PC-3 (cell line): ENCODE measurements at regions of chr3 and their contacts with region 1.

Region 1: DNA sequence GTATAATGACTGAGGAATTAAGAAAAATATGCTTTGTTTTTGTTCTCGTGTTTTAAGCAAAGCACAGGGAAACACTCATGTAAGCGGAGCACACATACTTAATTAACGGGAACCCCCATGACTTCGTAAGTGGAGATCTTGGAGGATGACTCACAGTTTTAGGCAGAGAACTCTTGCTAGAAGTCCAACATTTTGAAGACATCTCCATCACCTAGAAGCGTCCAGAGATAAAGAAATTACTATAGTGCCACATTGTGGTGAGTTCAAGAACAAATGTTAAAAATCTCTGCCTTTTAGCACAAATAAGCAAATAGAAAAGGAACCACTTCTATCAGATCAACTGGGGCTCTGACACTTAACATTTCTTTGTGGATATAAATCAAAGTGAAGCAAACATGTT is 194.1 kb upstream of the ARHGEF26 start:
- DNase-seq: peak; percentile 80
- ATAC-seq: peak; percentile 93
- H3K4me3 ChIP-seq: 0 out of 2 replicates have a peak overlapping the region, but pooled peaks have one; percentile 5
- H3K27ac ChIP-seq: no peak overlapping the region
- H3K4me1 ChIP-seq: peaks cover 6% of the 10 kb centered on the region
- H3K27me3 ChIP-seq: no peaks in the 10 kb centered on the region
- CTCF ChIP-seq: peak; percentile 65

Region 2: DNA sequence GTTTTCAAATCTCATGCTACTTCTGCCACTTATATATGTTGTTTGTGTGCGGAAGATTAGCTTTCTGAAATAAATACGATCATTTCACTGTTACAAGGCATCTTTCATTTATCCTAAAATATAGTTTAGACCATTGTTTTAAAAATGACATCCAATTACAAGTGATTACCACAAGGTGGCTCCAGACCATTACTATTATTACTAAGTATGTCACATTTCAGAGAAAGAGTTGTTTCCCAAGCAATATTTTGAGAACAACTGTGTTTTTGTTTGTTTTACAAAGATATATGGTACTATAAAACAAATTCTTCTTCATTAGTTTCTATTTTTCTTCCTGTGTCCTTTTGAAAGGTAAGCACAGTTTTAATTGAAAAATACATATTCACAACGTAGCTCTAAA is 901.1 kb before region 1 on chr3:
- CTCF ChIA-PET with region 1: no interaction called
- POLR2A ChIA-PET with region 1: no interaction called
- intact Hi-C with region 1: loop called (anchors 5 kb)
- DNase-seq: peak; percentile 67
- ATAC-seq: peak; percentile 33
- H3K4me3 ChIP-seq: no peak overlapping the region
- H3K27ac ChIP-seq: no peak overlapping the region
- H3K4me1 ChIP-seq: no peaks in the 10 kb centered on the region
- H3K27me3 ChIP-seq: no peaks in the 10 kb centered on the region
- CTCF ChIP-seq: peak; percentile 91

Region 3: DNA sequence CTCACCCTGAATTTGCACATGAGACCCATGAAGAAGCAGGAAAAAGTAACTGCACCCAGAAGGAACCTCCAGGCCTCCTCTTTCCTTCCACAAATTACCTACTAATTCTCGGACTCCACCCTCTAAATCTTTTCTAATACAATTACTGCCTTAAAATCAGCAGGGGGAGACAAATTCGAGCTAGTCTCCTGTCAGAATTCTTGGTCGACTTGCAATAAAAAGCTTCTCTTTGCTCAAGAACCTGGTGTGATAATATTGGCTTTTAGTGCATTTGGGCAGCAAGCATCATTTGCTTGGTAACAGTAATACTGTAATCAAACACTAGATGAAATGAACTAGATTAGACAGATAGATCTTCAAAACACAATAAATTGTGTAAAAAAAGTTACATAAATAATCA is 483.1 kb before region 1 on chr3:
- CTCF ChIA-PET with region 1: no interaction called
- POLR2A ChIA-PET with region 1: no interaction called
- intact Hi-C with region 1: loop called (anchors 2 kb)
- DNase-seq: peak; percentile 65
- ATAC-seq: no peak
- H3K4me3 ChIP-seq: no peak overlapping the region
- H3K27ac ChIP-seq: no peak overlapping the region
- H3K4me1 ChIP-seq: no peaks in the 10 kb centered on the region
- H3K27me3 ChIP-seq: no peaks in the 10 kb centered on the region
- CTCF ChIP-seq: peak; percentile 72

Region 4: DNA sequence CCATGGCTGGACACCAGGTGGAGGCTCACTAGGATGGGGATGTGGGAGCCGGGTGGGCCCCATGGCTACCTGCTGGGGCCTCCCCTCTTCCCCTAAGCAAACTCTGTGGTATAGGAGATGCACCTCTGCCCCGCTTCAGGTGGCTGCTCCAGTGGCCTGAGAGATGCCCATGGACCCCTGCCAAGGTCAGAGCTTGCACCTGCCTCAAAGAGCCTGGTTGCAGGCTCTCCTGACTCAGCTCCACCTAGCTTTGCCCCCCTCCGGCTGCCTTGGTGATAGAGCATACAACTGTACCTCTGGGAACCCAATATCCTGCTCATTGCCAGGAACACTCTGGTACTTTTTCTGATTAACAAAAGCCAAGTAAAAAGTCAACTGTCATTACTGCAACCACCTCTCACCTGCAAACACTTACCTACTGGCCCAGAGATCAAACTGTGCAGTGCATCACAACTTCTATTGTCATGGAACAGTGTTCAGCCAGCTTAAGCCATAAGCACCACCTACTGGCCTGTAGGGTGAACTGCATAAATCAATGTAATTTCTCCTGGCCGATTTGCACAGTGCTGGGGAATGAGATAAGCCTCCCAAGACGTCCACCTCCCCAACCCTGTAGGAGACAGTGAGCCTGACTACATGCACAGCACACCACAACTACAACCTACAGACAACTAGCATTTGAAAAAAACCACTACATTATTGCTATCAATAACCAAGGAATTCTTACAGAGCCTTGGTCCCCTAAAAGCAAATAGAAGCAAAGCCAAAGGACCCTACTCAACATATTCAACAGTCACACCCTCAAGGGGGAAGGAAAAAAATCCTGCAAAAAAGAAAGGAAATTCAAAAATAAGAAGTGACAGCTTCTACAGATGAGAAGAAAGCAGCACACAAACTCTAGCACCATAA is 158.3 kb before region 1 on chr3:
- CTCF ChIA-PET with region 1: no interaction called
- POLR2A ChIA-PET with region 1: no interaction called
- intact Hi-C with region 1: loop called (anchors 2 kb)
- DNase-seq: peak; percentile 78
- ATAC-seq: peak; percentile 93
- H3K4me3 ChIP-seq: no peak overlapping the region
- H3K27ac ChIP-seq: no peak overlapping the region
- H3K4me1 ChIP-seq: 0 out of 2 replicates have a peak, but pooled peaks cover 4% of the 10 kb centered on the region
- H3K27me3 ChIP-seq: no peaks in the 10 kb centered on the region
- CTCF ChIP-seq: peak; percentile 96

Region 5: DNA sequence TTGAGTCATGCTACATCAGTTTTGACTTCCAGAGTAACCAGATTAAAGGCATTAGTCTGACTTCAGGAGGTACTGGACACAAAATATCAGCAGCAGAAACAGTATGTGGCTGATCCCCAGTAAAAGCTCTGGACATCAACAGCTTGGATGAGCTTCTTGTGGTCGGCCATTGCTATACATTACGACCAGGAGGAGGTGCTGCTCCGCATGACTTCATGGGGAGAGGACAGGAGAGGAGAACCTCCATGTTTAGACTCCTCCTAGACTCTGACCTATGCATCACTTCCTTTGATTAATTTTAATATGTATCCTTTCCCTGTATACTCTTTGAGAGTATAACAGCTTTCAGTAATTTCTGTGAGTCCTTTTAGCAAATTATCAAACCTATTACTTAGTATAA is 91.6 kb before region 1 on chr3:
- CTCF ChIA-PET with region 1: no interaction called
- POLR2A ChIA-PET with region 1: no interaction called
- intact Hi-C with region 1: loop called (anchors 1 kb)
- DNase-seq: peak; percentile 32
- ATAC-seq: peak; percentile 33; the same call in 1 of the 2 replicates
- H3K4me3 ChIP-seq: no peak overlapping the region
- H3K27ac ChIP-seq: no peak overlapping the region
- H3K4me1 ChIP-seq: peaks cover 10% of the 10 kb centered on the region
- H3K27me3 ChIP-seq: no peaks in the 10 kb centered on the region
- CTCF ChIP-seq: peak; percentile 52

Region 6: DNA sequence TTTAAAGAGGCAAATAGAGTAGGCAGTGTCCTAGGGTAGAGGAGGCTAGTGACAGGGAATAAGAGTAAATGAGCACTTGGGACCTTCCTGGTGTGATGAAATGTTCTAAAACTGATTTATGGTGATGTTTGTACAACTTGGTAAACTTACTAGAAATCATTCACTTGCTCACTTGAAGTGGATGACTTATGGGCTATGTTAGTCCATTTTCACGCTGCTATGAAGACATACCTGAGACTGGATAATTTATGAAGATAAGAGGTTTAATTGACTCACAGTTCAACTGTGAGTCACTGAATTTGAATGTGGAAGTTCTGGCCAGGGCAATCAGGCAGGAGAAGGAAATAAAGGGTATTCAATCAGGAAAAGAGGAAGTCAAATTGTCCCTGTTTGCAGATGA is 428.9 kb after region 1 on chr3:
- CTCF ChIA-PET with region 1: no interaction called
- POLR2A ChIA-PET with region 1: no interaction called
- intact Hi-C with region 1: no loop called
- DNase-seq: peak; percentile 58
- ATAC-seq: peak; percentile 33
- H3K4me3 ChIP-seq: no peak overlapping the region
- H3K27ac ChIP-seq: no peak overlapping the region
- H3K4me1 ChIP-seq: peaks cover 3% of the 10 kb centered on the region; the same call in 1 of the 2 replicates
- H3K27me3 ChIP-seq: no peaks in the 10 kb centered on the region
- CTCF ChIP-seq: no peak